PC-9 (cell line): ENCODE measurements at regions of chr4 and their contacts with region 1.

Region 1: DNA sequence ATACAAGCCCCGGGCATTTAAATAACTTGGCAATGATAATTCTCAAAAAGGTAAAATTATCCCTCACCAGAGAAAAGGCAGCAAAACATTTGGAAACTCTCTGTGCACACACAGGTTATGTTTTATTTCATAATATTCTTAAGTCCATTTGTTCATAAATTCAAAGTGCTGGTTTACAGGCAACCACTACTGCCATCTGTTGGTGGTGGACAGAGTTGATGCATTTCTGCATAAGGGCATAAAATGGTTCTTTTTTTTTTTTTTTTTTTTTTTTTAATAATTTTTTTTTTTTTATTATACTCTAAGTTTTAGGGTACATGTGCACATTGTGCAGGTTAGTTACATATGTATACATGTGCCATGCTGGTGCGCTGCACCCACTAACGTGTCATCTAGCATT is 31.5 kb upstream of the IL21 start:
- DNase-seq: peak; percentile 38 to 46
- H3K4me3 ChIP-seq: no peak overlapping the region
- H3K27ac ChIP-seq: no peak overlapping the region
- H3K4me1 ChIP-seq: no peaks in the 10 kb centered on the region
- H3K27me3 ChIP-seq: no peaks in the 10 kb centered on the region
- CTCF ChIP-seq: peak; percentile 70

Region 2: GRCh38 chr4:122665161-122665929 is 13.0 kb after region 1 on chr4:
- CTCF ChIA-PET with region 1: interaction called, 12 read pairs
- POLR2A ChIA-PET with region 1: no interaction called
- intact Hi-C with region 1: no loop called
- DNase-seq: no peak
- H3K4me3 ChIP-seq: no peak overlapping the region
- H3K27ac ChIP-seq: no peak overlapping the region
- H3K4me1 ChIP-seq: peaks cover 22% of the 10 kb centered on the region
- H3K27me3 ChIP-seq: no peaks in the 10 kb centered on the region
- CTCF ChIP-seq: no peak

Region 3: GRCh38 chr4:122865425-122865824 is 213.0 kb after region 1 on chr4:
- CTCF ChIA-PET with region 1: no interaction called
- POLR2A ChIA-PET with region 1: no interaction called
- intact Hi-C with region 1: no loop called
- DNase-seq: no peak
- H3K4me3 ChIP-seq: no peak overlapping the region
- H3K27ac ChIP-seq: no peak overlapping the region
- H3K4me1 ChIP-seq: no peaks in the 10 kb centered on the region
- H3K27me3 ChIP-seq: no peaks in the 10 kb centered on the region
- CTCF ChIP-seq: no peak